GM12878 (cell line): ENCODE measurements at regions of chr14 and their contacts with region 1.

Region 1: GRCh38 chr14:75022655-75023054 is 19.9 kb downstream of the EIF2B2 start:
- DNase-seq: no peak
- ATAC-seq: peak; percentile 65
- H3K4me3 ChIP-seq: no peak overlapping the region
- H3K27ac ChIP-seq: no peak overlapping the region
- H3K4me1 ChIP-seq: no peaks in the 10 kb centered on the region
- H3K27me3 ChIP-seq: no peaks in the 10 kb centered on the region
- CTCF ChIP-seq: peak; percentile 16 to 50 (median 26); a peak in 3 of 6 replicates
- EP300 ChIP-seq: no peak
- POLR2A ChIP-seq: no peak
- RAD21 ChIP-seq: peak; percentile 26; the same call in 1 of the 2 replicates

Region 2: DNA sequence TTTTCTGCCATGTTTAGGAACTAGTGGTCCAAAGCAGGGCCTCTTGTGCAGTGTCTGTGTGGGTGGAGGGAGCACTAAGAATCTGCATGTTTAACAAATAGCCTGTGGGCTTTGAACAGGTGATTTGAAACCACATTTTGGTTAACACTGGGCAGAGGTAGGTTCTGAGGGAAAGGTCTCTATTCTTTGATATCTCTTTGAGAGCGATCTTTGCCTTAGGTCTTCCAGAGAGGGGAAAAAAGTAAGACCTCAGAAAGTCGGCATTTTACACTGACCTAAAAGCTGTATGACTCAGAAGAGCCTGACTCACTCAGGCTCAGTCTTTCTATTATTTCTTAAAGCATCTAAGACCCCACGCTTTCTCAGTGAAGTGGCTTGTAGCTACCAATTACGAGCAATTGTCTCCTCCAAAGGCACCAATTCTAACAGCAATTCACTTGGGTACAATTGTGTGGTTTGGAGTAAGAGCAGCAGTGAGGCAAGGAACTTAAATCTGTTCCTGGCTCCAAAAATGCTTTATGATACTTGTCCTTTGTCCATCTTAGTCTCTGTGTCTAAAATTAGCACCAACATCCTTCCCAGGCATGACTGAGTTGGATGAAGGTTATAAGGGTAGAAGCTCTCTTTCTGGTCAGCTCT is 11.2 kb before region 1 on chr14:
- CTCF ChIA-PET with region 1: interaction called, 15 read pairs
- POLR2A ChIA-PET with region 1: interaction called, 4 read pairs
- RAD21 ChIA-PET with region 1: interaction called, 3 read pairs
- SMC1A ChIA-PET with region 1: interaction called, 13 read pairs
- in situ Hi-C with region 1: no loop called
- intact Hi-C with region 1: no loop called
- DNase-seq: no peak
- ATAC-seq: peak; percentile 34
- H3K4me3 ChIP-seq: no peak overlapping the region
- H3K27ac ChIP-seq: no peak overlapping the region
- H3K4me1 ChIP-seq: no peaks in the 10 kb centered on the region
- H3K27me3 ChIP-seq: no peaks in the 10 kb centered on the region
- CTCF ChIP-seq: no peak
- EP300 ChIP-seq: no peak
- POLR2A ChIP-seq: no peak
- RAD21 ChIP-seq: no peak